ENCODE measurements at regions of chr12 and their contacts with region 1.

Region 1: GRCh38 chr12:5171701-5172100 is 128.0 kb downstream of the KCNA5 start:
- DNase-seq: no peak
- ATAC-seq: peak; percentile 48
- H3K4me3 ChIP-seq: no peak overlapping the region
- H3K27ac ChIP-seq: no peak overlapping the region
- H3K4me1 ChIP-seq: no peaks in the 10 kb centered on the region
- H3K27me3 ChIP-seq: peaks cover 11% of the 10 kb centered on the region
- CTCF ChIP-seq: peak; percentile 57

Region 2: DNA sequence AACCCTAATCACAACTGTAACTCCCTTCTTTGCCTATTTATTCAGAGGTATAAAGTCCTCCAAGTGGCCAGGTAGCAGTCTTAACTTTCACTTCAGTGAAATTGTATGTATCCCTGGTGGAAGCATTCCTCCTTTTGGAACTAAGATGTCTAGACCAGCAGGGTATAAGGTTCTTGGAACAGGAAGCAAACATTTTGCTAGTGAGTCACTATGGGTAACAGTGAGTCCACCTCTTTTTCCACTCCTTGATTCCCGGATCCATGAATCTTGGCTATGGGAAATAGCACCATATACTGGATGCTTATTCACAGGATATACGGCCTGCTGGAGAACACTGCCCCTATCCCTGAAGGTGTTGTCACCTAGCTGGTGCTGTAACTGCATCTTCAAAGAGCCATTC is 47.8 kb before region 1 on chr12:
- intact Hi-C with region 1: no loop called
- DNase-seq: no peak
- ATAC-seq: no peak
- H3K4me3 ChIP-seq: no peak overlapping the region
- H3K27ac ChIP-seq: no peak overlapping the region
- H3K4me1 ChIP-seq: no peaks in the 10 kb centered on the region
- H3K27me3 ChIP-seq: no peaks in the 10 kb centered on the region
- CTCF ChIP-seq: no peak

Region 3: DNA sequence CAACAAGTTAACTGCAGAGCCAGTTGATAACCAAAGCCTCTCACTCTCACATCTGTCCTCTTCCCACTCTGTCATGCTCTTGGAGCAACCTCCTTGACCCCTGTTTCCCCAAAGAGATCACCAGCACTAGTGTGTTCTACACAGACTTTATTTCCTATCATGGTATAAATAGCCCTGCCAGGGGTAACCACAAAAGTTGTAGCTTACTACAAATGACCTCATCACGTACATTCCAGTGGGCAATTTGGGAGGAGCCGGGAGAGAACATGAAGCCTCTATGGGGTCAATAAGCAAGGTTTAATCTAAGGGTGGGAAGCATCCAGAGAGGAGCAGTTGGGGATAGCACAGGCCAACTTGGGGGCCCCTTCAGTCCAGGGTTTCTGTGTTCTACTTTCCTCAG is 58.5 kb after region 1 on chr12:
- intact Hi-C with region 1: no loop called
- DNase-seq: no peak
- ATAC-seq: no peak
- H3K4me3 ChIP-seq: no peak overlapping the region
- H3K27ac ChIP-seq: no peak overlapping the region
- H3K4me1 ChIP-seq: no peaks in the 10 kb centered on the region
- H3K27me3 ChIP-seq: no peaks in the 10 kb centered on the region
- CTCF ChIP-seq: no peak

Region 4: DNA sequence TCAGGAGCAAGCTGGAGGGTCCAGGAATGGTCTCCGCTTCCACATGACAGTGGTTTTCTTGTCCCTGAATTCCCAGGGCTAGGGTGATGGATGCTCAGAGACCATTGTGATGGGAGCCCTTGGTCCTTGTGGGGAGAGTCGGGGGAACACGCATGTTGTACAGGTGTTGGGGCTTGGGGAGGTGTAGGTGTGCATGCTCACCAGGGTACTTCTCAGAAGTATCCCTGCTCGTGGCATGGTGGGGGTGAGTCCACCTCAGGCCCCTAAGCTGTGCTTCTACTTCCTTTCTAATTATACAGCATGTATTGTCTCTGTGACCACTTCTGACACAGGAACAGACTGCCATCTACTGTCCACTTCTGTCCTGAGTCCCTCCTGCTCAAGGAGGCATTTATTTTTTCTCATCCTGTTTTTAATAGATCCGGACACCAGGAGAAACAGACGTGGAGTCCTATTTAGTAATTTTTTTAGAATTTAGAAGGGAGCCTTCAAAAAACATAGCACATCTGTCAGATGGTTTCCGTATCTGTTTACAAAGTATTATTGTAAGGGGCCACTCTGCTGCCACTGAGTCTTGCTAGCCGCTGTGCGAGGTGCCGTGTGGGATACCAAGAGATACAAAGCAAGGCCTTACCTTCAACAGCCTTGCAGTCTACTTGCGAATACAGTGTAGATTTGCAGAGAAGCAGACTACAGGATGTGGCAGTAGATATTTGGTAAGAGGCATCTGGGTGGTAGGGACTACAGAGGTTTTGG is 270.7 kb after region 1 on chr12:
- intact Hi-C with region 1: loop called (anchors 10 kb)
- DNase-seq: no peak
- ATAC-seq: peak; percentile 58
- H3K4me3 ChIP-seq: no peak overlapping the region
- H3K27ac ChIP-seq: no peak overlapping the region
- H3K4me1 ChIP-seq: no peaks in the 10 kb centered on the region
- H3K27me3 ChIP-seq: peaks cover 9% of the 10 kb centered on the region
- CTCF ChIP-seq: peak; percentile 56

Measured in upper lobe of right lung (tissue), 1 donor.